ENCODE measurements at regions of chr10 and their contacts with region 1.

Region 1: DNA sequence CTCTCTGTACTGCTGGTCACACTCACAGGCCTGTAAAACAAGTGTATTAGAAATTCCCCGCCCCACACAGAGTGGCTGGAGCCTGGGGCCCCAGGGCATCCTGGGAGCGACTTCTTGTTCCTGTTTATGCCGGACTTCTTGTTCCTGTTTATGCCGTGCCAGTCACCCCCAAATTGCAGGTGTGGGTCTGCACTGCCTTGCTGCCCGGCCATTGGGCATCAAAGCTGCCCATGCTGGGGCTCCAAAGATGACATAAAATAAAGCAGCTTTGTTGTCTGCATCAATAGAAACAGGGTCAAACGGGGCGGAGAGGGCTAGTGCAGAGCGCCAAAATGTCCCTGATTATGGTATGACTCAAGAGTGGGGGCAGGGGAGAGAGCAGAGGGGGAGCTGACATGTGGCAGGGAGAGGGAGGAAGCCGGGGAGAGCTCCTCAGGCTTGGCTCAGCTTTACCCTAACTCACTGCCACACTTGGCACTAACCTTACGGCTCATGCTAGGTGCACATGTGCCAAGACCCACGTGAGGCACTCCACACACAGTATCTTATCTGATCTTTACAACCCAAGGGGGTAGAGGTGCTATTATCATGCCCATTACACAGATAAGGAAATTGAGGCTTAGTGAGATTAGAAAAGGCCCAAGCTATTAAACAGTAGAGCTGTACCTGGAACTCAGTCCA is 98.4 kb downstream of the PIP4K2A start:
- DNase-seq: peak; percentile 73
- ATAC-seq: peak; percentile 59
- H3K4me3 Mint-ChIP-seq: peak overlapping the region; percentile 70
- H3K27ac Mint-ChIP-seq: peak overlapping the region; percentile 86
- H3K4me1 Mint-ChIP-seq: peaks cover 95% of the 10 kb centered on the region
- H3K27me3 Mint-ChIP-seq: no peaks in the 10 kb centered on the region

Region 2: DNA sequence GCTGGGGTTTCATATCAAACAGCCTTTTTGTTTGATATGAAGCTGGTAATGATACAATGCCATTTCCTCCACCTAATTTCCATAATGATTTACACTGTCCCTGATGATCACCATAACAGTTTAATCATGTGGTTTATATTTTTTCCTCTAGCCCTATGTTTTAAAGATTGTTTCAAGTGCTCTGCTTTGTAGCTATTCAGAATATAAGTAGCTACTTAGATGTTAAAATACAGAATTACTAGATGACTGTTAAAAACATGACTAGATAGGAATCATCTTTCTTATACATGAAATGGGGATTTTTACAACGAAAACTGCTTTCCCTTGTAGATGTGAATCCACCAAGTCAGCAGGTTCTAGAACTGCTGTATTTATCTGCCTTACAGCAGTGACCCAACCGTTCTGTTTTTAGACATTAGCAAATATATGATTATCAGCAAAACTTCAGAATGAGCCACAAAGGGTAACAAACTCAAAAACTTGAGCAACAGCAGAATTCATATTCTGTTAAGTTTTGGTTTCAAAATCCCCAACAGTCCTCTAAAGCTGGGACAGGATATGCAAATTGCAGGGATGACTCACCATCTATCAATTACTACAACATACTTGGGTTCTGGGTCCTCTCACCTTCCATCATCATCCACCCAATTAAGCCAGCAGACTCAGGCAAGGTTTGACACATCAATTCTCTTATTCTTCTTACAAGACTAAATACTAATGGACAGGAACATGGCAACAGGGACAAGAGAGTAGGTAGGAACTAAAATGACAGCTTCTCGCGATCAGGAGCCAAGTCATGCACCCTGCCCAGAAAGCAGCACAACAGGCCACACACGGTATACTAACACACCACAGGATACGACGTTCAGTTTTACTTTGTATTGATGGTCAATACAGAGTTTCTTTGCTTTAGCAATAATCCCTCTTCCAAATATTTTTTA is 14.5 kb after region 1 on chr10:
- CTCF ChIA-PET with region 1: interaction called, 15 read pairs
- DNase-seq: peak; percentile 63
- ATAC-seq: peak; percentile 85
- H3K4me3 Mint-ChIP-seq: peak overlapping the region; percentile 74
- H3K27ac Mint-ChIP-seq: peak overlapping the region; percentile 97
- H3K4me1 Mint-ChIP-seq: peaks cover 87% of the 10 kb centered on the region
- H3K27me3 Mint-ChIP-seq: no peaks in the 10 kb centered on the region

Measured in activated CD8-positive, alpha-beta memory T cell treated with anti-CD3 and anti-CD28 coated beads, Interleukin-2, amount 10 ng/mL, durations not matched to agents 7 days and 5 days (primary cell).